Dorsolateral prefrontal cortex (tissue), 120 donors: ENCODE measurements at regions of chr4 and their contacts with region 1.

Region 1: DNA sequence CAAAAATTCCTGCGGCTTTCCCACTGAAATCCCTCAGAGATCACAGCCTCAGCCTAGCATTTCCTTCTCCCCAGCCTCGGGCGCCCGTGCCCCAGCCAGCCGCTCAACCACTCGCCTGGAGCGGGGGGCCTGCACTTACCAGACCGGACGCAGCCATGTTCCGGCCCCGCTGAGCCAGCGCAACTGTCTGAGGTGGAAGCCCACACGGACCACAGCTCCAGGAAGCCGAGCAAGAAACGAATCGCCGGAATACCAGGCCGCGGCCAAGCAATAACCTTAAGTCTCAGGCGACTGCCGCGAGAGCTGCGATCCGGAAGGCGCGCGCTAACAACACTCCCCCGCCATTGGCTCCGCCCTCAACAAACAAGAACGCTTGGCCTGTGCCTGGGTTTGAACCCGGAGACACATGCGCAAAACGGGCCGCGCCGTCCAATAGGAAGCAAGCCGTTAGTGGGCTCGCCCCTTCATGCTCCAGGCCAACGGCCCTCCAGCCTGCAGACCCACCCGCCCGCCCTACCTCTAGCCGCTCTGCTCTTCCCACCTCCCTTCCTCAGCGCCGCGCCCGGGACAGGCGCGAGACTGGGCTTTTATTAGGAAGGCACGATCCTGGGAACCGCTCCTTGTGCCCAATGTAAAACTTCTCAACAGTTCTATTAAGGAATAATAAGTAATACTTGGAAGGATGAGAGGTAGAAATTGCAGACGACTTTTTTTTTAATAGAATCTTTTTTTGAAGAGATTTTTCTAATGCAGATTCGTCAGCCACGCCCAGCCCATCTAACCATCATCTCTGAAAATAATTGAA is at the start of gene CENPC:
- DNase-seq: peak; percentile 94 to 97 (median 96)
- H3K4me3 ChIP-seq: peak within 1 kb of the TSS; percentile 50 to 96 (median 84)
- H3K27ac ChIP-seq: peak within 1 kb of the TSS; percentile 4 to 94 (median 88)
- H3K27me3 ChIP-seq: no peaks in the 10 kb centered on the region
- CTCF ChIP-seq: peak in 24 of 56 donors; percentile 7 to 61 (median 24)
- total RNA-seq, gene CENPC: 30.9 to 68.9 (median 46.0) TPM

Region 2: DNA sequence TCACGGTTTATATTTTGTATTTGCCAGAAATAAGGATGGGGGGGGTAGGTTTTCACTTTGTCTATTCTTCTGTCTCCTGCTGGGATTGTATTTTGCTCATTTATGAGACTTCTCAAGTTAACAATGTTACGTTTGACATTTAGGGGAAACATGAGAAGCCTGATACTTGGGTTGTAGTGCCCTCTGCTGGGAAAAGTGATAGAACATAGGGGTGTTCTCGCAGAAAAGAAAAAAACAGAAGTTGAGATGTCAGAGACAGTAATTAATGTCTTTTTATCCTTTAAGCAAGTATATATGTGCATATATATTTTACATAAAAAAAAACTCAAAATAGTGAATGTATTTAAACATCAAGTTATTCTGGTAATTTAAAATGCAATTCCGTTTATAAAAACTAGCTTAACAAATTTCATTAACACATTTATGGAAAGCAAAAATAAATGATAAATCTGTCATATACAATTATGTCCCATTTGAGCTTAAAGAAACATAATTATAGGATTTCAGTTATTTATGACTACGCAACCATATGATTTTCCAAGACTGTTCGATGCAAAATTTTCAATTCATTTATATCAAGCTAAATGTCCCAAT is 630.3 kb after region 1 on chr4:
- intact Hi-C with region 1: loop called in 1 of 2 experiments (anchors 10 kb)
- DNase-seq: peak in 2 of 10 donors; percentile 47 to 54
- H3K4me3 ChIP-seq: no peak overlapping the region
- H3K27ac ChIP-seq: no peak overlapping the region
- H3K27me3 ChIP-seq: peaks cover 0 to 5% (median 0%) of the 10 kb centered on the region in 45 donors
- CTCF ChIP-seq: peak; percentile 59 to 92 (median 77)